GM23248 (cell line): ENCODE measurements at regions of chr2 and their contacts with region 1.

Region 1: DNA sequence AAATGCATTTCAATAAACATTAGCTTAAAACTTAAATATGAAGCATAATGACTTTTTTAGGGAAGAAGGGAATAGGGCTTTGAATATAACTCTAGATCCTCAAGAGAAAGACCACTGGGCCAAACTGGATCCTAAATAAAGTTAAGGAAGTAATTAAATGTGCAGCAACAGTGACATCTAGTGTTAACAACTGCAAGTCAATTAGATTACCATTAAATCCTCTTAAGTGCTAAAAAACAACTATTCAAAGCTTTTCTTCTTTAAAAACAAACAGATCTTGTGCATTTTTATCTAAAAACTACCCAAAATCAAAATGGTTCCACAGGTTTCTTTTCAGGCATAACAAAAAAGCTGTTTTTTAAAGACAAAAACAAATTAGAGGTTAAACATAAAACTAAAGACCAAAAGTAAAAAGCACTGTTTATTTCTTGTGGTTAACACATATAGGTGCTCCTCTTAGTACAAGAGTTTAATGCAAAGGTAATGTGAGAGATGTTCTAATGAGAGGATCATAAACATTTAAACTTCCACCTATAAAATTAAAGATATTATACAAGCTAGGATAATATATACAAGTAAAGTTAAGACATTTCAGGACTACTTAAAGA is 111.4 kb downstream of the THADA start:
- DNase-seq: peak; percentile 77
- H3K4me3 ChIP-seq: no peak overlapping the region
- H3K27ac ChIP-seq: no peak overlapping the region
- H3K4me1 ChIP-seq: peaks cover 10% of the 10 kb centered on the region
- H3K27me3 ChIP-seq: no peaks in the 10 kb centered on the region

Region 2: GRCh38 chr2:42828487-42829425 is 655.7 kb before region 1 on chr2:
- in situ Hi-C with region 1: loop called (anchors 10 kb)
- DNase-seq: peak; percentile 82
- H3K4me3 ChIP-seq: no peak overlapping the region
- H3K27ac ChIP-seq: no peak overlapping the region
- H3K4me1 ChIP-seq: peaks cover 14% of the 10 kb centered on the region
- H3K27me3 ChIP-seq: no peaks in the 10 kb centered on the region

Region 3: GRCh38 chr2:42959234-42960001 is 525.0 kb before region 1 on chr2:
- in situ Hi-C with region 1: loop called (anchors 10 kb)
- DNase-seq: peak; percentile 70
- H3K4me3 ChIP-seq: no peak overlapping the region
- H3K27ac ChIP-seq: peak overlapping the region; percentile 68
- H3K4me1 ChIP-seq: peaks cover 54% of the 10 kb centered on the region
- H3K27me3 ChIP-seq: no peaks in the 10 kb centered on the region

Region 4: DNA sequence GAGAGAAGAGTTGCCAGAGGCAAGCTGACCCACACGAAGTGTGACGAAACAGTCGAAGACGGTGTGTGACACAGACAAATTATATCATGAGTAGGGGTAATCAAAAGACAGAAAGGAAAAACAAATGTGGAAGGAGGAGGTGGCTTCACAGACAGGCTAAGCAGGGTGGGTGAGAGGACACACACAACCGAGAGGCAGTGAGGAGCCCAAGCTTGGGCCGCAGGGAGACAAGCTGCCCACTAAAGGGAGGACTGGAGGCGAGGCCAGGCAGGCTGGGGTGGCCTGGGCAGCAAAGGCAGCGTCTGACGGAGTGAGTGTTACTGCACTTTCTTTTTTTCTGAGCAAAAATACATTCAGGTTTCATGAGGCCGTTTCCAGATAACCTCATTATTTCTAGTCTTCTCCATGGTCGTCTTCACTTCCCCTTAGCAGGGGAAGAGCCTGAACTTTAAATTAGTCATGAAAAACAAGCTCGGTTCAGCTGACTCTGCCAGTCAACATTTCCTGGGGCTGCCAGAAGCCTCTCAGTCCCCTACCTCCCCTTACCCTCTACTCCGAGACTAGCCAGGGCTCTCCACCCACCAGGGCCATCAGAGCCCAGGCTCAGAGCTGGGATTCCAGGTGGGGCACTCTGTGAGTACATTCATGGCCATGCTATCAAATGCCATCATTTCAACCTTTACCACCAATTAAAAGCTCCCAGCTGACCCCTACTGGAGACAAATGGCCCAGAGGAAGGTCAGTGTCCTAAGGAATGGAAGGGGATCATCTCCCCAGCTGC is 244.3 kb before region 1 on chr2:
- in situ Hi-C with region 1: loop called (anchors 10 kb)
- DNase-seq: no peak
- H3K4me3 ChIP-seq: no peak overlapping the region
- H3K27ac ChIP-seq: no peak overlapping the region
- H3K4me1 ChIP-seq: peaks cover 8% of the 10 kb centered on the region
- H3K27me3 ChIP-seq: no peaks in the 10 kb centered on the region

Region 5: DNA sequence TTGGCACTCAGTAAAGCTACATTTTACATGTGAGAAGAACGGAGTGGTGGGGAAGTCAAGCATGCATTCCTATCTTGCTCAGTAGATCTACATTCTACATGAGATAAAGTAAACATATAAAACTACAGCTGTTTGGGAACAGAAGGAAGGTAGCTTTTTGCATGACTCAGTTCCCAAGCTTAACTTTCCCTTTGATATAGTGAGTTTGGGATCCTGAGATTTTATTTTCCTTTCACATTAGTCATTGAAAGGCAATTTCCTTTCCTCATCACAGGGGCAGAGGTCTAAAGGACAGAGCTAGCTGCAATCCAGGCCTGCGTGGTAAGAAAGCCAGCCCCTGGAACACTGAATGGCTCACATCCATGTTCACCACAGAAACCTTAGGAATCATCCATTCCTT is 1869.5 kb after region 1 on chr2:
- in situ Hi-C with region 1: no loop called
- DNase-seq: peak; percentile 90
- H3K4me3 ChIP-seq: no peak overlapping the region
- H3K27ac ChIP-seq: peak overlapping the region; percentile 45
- H3K4me1 ChIP-seq: peaks cover 12% of the 10 kb centered on the region
- H3K27me3 ChIP-seq: 0 out of 2 replicates have a peak, but pooled peaks cover 3% of the 10 kb centered on the region